Endothelial cell of umbilical vein (primary cell): ENCODE measurements at regions of chr13 and their contacts with region 1.

Region 1: GRCh38 chr13:37701972-37702371 is 103.4 kb upstream of the POSTN start:
- DNase-seq: peak; percentile 51
- H3K4me3 ChIP-seq: no peak overlapping the region
- H3K27ac ChIP-seq: peak overlapping the region; percentile 95
- H3K4me1 ChIP-seq: peaks cover 24% of the 10 kb centered on the region
- H3K27me3 ChIP-seq: no peaks in the 10 kb centered on the region
- CTCF ChIP-seq: no peak
- POLR2A ChIP-seq: no peak

Region 2: GRCh38 chr13:37715606-37716015 is 13.6 kb after region 1 on chr13:
- CTCF ChIA-PET with region 1: interaction called, 4 read pairs
- POLR2A ChIA-PET with region 1: no interaction called
- dilution Hi-C with region 1: no loop called
- intact Hi-C with region 1: loop called (anchors 1 kb)
- DNase-seq: peak; percentile 93
- H3K4me3 ChIP-seq: no peak overlapping the region
- H3K27ac ChIP-seq: peak overlapping the region; percentile 90
- H3K4me1 ChIP-seq: peaks cover 28% of the 10 kb centered on the region
- H3K27me3 ChIP-seq: no peaks in the 10 kb centered on the region
- CTCF ChIP-seq: no peak
- POLR2A ChIP-seq: peak; percentile 32

Region 3: DNA sequence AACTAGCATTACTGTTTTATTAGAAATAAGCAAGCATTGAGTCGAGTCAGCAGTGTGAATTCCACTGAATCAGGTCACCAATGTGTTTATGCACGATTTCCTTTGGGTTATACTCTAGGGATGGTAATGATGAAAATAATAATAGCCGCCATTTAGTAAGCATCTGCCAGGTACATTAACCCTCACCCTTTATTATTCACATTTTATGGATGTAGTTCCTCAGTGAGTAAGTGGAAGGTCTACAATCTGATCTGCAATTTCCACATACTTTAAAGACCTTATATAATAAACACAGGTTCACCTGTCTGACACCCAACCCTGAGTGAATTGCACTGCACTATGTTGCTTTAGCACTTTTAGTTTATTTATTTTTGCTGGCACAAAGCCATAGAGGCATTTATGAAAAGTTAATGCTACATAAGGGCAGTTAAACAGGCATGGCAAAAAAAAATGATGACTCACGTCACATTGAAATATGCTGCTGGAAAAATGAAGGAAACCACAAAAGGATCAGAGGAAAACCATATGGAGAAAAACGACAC is 45.2 kb after region 1 on chr13:
- CTCF ChIA-PET with region 1: no interaction called
- POLR2A ChIA-PET with region 1: no interaction called
- dilution Hi-C with region 1: no loop called
- intact Hi-C with region 1: loop called (anchors 1 kb)
- DNase-seq: peak; percentile 84
- H3K4me3 ChIP-seq: no peak overlapping the region
- H3K27ac ChIP-seq: peak overlapping the region; percentile 61
- H3K4me1 ChIP-seq: peaks cover 16% of the 10 kb centered on the region
- H3K27me3 ChIP-seq: no peaks in the 10 kb centered on the region
- CTCF ChIP-seq: no peak
- POLR2A ChIP-seq: no peak